Activated CD8-positive, alpha-beta T cell treated with anti-CD3 and anti-CD28 coated beads for 36 hours (primary cell): ENCODE measurements at regions of chr5 and their contacts with region 1.

Region 1: DNA sequence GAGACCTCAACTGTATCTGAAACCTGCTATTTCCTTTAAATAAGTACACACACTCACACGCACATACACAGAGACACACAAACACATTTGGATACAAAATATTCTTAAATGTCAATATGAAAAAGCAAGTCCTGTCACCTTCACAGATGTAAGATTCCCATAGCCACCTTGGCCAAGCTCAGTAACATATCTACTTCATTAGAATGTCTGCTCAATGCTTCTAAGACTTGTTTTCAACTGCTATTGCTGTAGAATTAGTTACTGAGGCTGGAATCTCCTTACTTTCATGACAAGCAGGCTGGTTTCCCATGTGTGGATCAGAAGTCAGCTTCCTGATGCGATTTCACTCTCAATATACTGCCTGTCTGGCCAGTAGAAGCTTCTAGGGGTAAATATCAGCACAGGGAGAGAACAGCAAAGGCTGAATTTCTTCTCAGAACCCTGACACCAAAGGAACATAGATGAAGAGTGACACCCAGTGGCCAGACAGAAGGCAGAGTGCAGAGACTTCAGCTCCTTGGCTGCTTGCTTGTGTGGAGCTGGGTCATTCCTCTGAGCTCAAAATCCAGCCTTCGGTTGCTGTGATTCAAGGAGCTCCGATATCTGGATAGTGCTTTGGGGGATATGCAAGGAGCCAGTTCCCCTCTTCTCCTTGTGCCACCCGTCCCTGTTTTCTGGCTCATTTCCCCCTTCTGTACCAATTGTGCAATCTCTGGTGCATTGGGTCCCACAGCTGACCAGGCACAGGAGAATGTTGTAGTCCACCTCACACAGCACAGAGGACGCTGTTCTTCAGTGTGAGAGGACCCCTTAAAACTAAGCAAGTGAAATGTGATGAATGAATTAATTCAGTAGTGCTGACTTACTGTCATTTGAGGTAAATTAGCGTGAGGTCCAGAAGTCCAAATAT is 26.6 kb upstream of the ABLIM3 start:
- DNase-seq: peak; percentile 58
- ATAC-seq: peak; percentile 64
- H3K4me3 Mint-ChIP-seq: no peak overlapping the region
- H3K27ac Mint-ChIP-seq: no peak overlapping the region
- H3K4me1 Mint-ChIP-seq: no peaks in the 10 kb centered on the region
- H3K27me3 Mint-ChIP-seq: peaks cover 18% of the 10 kb centered on the region
- CTCF ChIP-seq: peak; percentile 60

Region 2: DNA sequence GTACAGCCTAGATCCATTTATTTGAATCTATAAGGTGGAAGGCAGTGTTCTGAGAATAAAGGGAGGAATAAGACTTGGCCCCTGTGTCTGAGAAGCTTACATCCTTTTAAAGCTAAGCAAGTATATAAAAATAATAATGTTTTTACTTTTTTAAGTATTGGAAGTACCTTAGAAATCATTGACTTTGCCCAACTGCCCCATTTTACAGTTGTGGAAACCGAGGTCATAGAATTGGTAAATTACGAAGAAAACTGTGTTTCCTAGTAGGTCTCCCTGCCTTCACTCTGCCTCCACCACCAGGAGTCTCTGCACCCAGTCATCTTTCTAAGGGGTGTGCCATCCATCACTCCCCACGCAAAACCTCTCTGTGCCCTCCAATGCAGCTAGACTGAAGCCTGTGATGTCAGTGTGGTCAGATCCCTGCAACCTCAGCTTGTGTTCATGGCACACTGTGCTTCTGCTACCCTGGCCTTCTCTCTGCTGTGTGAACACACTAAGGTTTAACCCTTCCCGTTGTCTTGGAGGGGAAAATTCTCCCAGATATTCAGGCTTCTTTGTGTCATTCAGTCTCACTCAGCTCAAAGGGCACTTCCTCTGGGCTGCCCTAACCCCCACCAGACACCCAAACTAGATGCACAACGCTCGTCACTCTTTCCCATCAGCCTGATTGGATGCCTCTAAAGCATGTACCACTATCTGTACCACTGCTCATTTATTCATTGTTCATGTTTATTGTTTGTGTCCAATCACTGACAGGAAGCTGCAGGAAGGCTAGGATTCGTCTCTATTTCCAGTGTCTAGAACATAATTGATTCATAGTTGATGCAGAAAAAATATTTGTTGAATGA is 270.0 kb before region 1 on chr5:
- CTCF ChIA-PET with region 1: no interaction called
- POLR2A ChIA-PET with region 1: no interaction called
- intact Hi-C with region 1: no loop called
- DNase-seq: peak; percentile 64
- ATAC-seq: peak; percentile 55
- H3K4me3 Mint-ChIP-seq: no peak overlapping the region
- H3K27ac Mint-ChIP-seq: peak overlapping the region; percentile 77
- H3K4me1 Mint-ChIP-seq: peaks cover 34% of the 10 kb centered on the region
- H3K27me3 Mint-ChIP-seq: no peaks in the 10 kb centered on the region
- CTCF ChIP-seq: no peak

Region 3: GRCh38 chr5:149056616-149057165 is 58.0 kb before region 1 on chr5:
- CTCF ChIA-PET with region 1: interaction called, 11 read pairs
- POLR2A ChIA-PET with region 1: no interaction called
- intact Hi-C with region 1: no loop called
- DNase-seq: no peak
- ATAC-seq: no peak
- H3K4me3 Mint-ChIP-seq: no peak overlapping the region
- H3K27ac Mint-ChIP-seq: no peak overlapping the region
- H3K4me1 Mint-ChIP-seq: no peaks in the 10 kb centered on the region
- H3K27me3 Mint-ChIP-seq: peaks cover 12% of the 10 kb centered on the region
- CTCF ChIP-seq: no peak

Region 4: GRCh38 chr5:149094981-149095380 is 19.7 kb before region 1 on chr5:
- CTCF ChIA-PET with region 1: no interaction called
- POLR2A ChIA-PET with region 1: no interaction called
- intact Hi-C with region 1: loop called (anchors 2 kb)
- DNase-seq: no peak
- ATAC-seq: no peak
- H3K4me3 Mint-ChIP-seq: no peak overlapping the region
- H3K27ac Mint-ChIP-seq: no peak overlapping the region
- H3K4me1 Mint-ChIP-seq: no peaks in the 10 kb centered on the region
- H3K27me3 Mint-ChIP-seq: peaks cover 10% of the 10 kb centered on the region
- CTCF ChIP-seq: no peak

Region 5: GRCh38 chr5:149125386-149125891 is 10.8 kb after region 1 on chr5:
- CTCF ChIA-PET with region 1: interaction called, 25 read pairs
- POLR2A ChIA-PET with region 1: no interaction called
- intact Hi-C with region 1: no loop called
- DNase-seq: no peak
- ATAC-seq: no peak
- H3K4me3 Mint-ChIP-seq: no peak overlapping the region
- H3K27ac Mint-ChIP-seq: no peak overlapping the region
- H3K4me1 Mint-ChIP-seq: no peaks in the 10 kb centered on the region
- H3K27me3 Mint-ChIP-seq: peaks cover 5% of the 10 kb centered on the region
- CTCF ChIP-seq: no peak

Region 6: DNA sequence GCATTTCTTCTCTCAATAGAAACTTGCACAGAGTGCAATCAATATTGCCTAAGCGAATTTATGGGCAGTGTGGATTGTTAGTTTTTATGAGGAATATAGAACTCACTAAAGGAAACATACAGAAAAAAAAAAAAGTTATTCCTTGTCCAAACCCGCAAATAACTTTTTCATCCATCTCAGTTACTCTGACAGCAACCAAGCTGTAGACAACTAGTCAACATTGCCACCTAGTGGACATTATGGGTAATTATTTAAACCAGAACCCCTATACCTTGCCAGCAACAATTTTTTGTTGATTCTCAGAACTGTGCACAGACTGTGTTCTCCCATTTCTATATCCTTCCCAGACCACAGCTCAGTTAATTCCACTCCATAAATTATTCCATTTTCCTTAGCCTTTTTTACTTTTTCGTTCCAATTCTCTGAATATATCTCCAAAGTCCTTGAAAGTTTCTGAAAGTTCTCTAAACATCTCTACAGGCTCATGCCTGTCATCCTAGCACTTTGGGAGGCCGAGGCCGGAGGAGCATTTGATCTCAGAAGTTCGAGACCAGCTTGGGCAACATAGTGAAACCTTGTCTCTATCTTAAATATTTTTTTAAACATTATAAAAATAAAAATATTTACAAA is 154.4 kb after region 1 on chr5:
- CTCF ChIA-PET with region 1: interaction called, 10 read pairs
- POLR2A ChIA-PET with region 1: no interaction called
- intact Hi-C with region 1: no loop called
- DNase-seq: no peak
- ATAC-seq: peak; percentile 52
- H3K4me3 Mint-ChIP-seq: no peak overlapping the region
- H3K27ac Mint-ChIP-seq: no peak overlapping the region
- H3K4me1 Mint-ChIP-seq: peaks cover 6% of the 10 kb centered on the region
- H3K27me3 Mint-ChIP-seq: peaks cover 24% of the 10 kb centered on the region
- CTCF ChIP-seq: peak; percentile 97